ENCODE measurements at regions of chr11 and their contacts with region 1.

Region 1: GRCh38 chr11:13335319-13335718 is 57.7 kb downstream of the BMAL1 start:
- DNase-seq: peak; percentile 57 to 82 (median 70)
- ATAC-seq: peak; percentile 70
- H3K4me3 ChIP-seq: no peak overlapping the region
- H3K4me3 Mint-ChIP-seq: no peak overlapping the region
- H3K27ac ChIP-seq: no peak overlapping the region
- H3K27ac Mint-ChIP-seq: peak overlapping the region; percentile 15
- H3K4me1 ChIP-seq: peaks cover 52% of the 10 kb centered on the region
- H3K4me1 Mint-ChIP-seq: peaks cover 81% of the 10 kb centered on the region
- H3K27me3 ChIP-seq: no peaks in the 10 kb centered on the region
- H3K27me3 Mint-ChIP-seq: no peaks in the 10 kb centered on the region
- CTCF ChIP-seq: peak; percentile 86

Region 2: GRCh38 chr11:12963792-12964536 is 371.4 kb before region 1 on chr11:
- CTCF ChIA-PET with region 1: interaction called, 19 read pairs
- POLR2A ChIA-PET with region 1: no interaction called
- intact Hi-C with region 1: no loop called
- DNase-seq: peak; percentile 11 to 69 (median 58)
- ATAC-seq: peak; percentile 58
- H3K4me3 ChIP-seq: no peak overlapping the region
- H3K4me3 Mint-ChIP-seq: no peak overlapping the region
- H3K27ac ChIP-seq: no peak overlapping the region
- H3K27ac Mint-ChIP-seq: no peak overlapping the region
- H3K4me1 ChIP-seq: no peaks in the 10 kb centered on the region
- H3K4me1 Mint-ChIP-seq: no peaks in the 10 kb centered on the region
- H3K27me3 ChIP-seq: peaks cover 0 to 3% of the 10 kb centered on the region in 2 experiments
- H3K27me3 Mint-ChIP-seq: peaks cover 30% of the 10 kb centered on the region
- CTCF ChIP-seq: peak; percentile 52

Region 3: GRCh38 chr11:13118194-13118593 is 217.1 kb before region 1 on chr11:
- CTCF ChIA-PET with region 1: no interaction called
- POLR2A ChIA-PET with region 1: no interaction called
- intact Hi-C with region 1: no loop called
- DNase-seq: no peak
- ATAC-seq: no peak
- H3K4me3 ChIP-seq: no peak overlapping the region
- H3K4me3 Mint-ChIP-seq: no peak overlapping the region
- H3K27ac ChIP-seq: no peak overlapping the region
- H3K27ac Mint-ChIP-seq: no peak overlapping the region
- H3K4me1 ChIP-seq: no peaks in the 10 kb centered on the region
- H3K4me1 Mint-ChIP-seq: no peaks in the 10 kb centered on the region
- H3K27me3 ChIP-seq: no peaks in the 10 kb centered on the region
- H3K27me3 Mint-ChIP-seq: peaks cover 24% of the 10 kb centered on the region
- CTCF ChIP-seq: no peak

Region 4: DNA sequence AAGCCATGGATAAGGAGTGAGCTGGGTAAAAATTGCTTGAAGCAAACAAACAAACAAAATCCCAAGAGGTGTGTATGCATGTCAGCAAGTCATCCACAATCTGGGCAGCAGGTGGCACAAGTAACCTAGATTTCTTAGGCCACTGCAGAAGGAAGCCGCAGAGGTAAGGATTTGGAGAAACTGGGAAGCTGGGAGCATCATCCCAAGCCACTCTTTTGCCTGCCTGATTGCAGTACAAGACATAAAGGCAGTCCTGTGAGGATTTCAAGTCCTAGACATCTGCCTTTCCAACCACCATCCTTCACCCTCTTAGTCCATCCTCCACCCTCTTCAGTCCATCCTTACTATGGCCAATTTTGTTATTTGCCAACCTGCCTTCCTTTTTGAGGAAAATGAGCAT is 124.9 kb before region 1 on chr11:
- CTCF ChIA-PET with region 1: interaction called, 25 read pairs
- POLR2A ChIA-PET with region 1: no interaction called
- intact Hi-C with region 1: loop called (anchors 2 kb)
- DNase-seq: peak in 4 of 9 experiments; percentile 26 to 52 (median 36)
- ATAC-seq: peak; percentile 26
- H3K4me3 ChIP-seq: no peak overlapping the region
- H3K4me3 Mint-ChIP-seq: no peak overlapping the region
- H3K27ac ChIP-seq: no peak overlapping the region
- H3K27ac Mint-ChIP-seq: no peak overlapping the region
- H3K4me1 ChIP-seq: peaks cover 7% of the 10 kb centered on the region
- H3K4me1 Mint-ChIP-seq: peaks cover 15% of the 10 kb centered on the region
- H3K27me3 ChIP-seq: no peaks in the 10 kb centered on the region
- H3K27me3 Mint-ChIP-seq: peaks cover 7% of the 10 kb centered on the region
- CTCF ChIP-seq: peak; percentile 22

Region 5: DNA sequence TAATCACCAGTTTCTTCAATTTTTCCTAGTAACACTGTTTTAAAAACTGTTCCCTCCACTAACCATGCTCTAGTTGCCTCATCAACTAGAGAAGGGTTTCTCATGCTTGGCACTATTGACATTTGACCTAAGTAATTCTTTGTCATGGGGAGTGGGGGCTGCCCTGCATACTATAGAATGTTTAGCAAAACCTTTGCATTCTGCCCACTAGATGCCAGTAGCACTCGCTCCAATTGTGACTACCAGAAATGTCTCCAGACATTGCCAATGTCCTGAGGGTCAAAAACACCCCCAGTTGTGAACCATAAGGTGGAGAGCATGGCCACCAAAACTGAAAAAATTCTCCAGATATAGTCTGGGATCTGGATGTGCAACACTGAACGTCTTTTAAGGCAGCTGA is 85.3 kb before region 1 on chr11:
- CTCF ChIA-PET with region 1: interaction called, 45 read pairs
- POLR2A ChIA-PET with region 1: no interaction called
- intact Hi-C with region 1: loop called (anchors 1 to 2 kb)
- DNase-seq: peak in 2 of 9 experiments; percentile 26 to 40
- ATAC-seq: no peak
- H3K4me3 ChIP-seq: no peak overlapping the region
- H3K4me3 Mint-ChIP-seq: no peak overlapping the region
- H3K27ac ChIP-seq: no peak overlapping the region
- H3K27ac Mint-ChIP-seq: no peak overlapping the region
- H3K4me1 ChIP-seq: no peaks in the 10 kb centered on the region
- H3K4me1 Mint-ChIP-seq: no peaks in the 10 kb centered on the region
- H3K27me3 ChIP-seq: no peaks in the 10 kb centered on the region
- H3K27me3 Mint-ChIP-seq: peaks cover 17% of the 10 kb centered on the region
- CTCF ChIP-seq: no peak

Region 6: GRCh38 chr11:13297917-13298356 is 37.4 kb before region 1 on chr11:
- CTCF ChIA-PET with region 1: interaction called, 15 read pairs
- POLR2A ChIA-PET with region 1: no interaction called
- intact Hi-C with region 1: no loop called
- DNase-seq: peak in 3 of 9 experiments; percentile 17 to 39 (median 34)
- ATAC-seq: peak; percentile 70
- H3K4me3 ChIP-seq: no peak overlapping the region
- H3K4me3 Mint-ChIP-seq: peak overlapping the region; percentile 27
- H3K27ac ChIP-seq: no peak overlapping the region
- H3K27ac Mint-ChIP-seq: no peak overlapping the region
- H3K4me1 ChIP-seq: peaks cover 46% of the 10 kb centered on the region
- H3K4me1 Mint-ChIP-seq: peaks cover 53% of the 10 kb centered on the region
- H3K27me3 ChIP-seq: no peaks in the 10 kb centered on the region
- H3K27me3 Mint-ChIP-seq: no peaks in the 10 kb centered on the region
- CTCF ChIP-seq: no peak

Region 7: DNA sequence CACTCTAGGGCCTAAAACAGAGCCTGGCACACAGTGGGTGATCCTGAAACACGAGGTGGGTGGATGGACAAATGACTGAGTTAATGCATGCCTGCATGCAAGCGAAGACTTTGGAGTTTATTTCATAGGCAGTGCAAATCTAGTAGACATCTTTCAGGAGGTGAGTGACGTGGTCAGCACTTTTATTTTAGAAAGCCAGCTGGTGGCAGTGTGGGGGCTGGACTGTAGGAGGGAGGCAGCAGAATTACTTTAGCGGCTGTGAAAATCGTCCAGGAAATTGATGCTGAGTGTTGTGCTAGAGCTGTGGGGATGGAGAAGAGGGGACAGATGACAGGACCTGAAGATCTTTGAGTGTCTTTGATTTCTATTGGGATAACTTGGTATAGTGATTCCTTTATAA is 10.6 kb before region 1 on chr11:
- CTCF ChIA-PET with region 1: interaction called, 21 read pairs
- POLR2A ChIA-PET with region 1: no interaction called
- intact Hi-C with region 1: no loop called
- DNase-seq: no peak
- ATAC-seq: no peak
- H3K4me3 ChIP-seq: no peak overlapping the region
- H3K4me3 Mint-ChIP-seq: no peak overlapping the region
- H3K27ac ChIP-seq: no peak overlapping the region
- H3K27ac Mint-ChIP-seq: no peak overlapping the region
- H3K4me1 ChIP-seq: no peaks in the 10 kb centered on the region
- H3K4me1 Mint-ChIP-seq: peaks cover 62% of the 10 kb centered on the region
- H3K27me3 ChIP-seq: no peaks in the 10 kb centered on the region
- H3K27me3 Mint-ChIP-seq: no peaks in the 10 kb centered on the region
- CTCF ChIP-seq: no peak